ENCODE measurements at regions of chr19 and their contacts with region 1.

Region 1: DNA sequence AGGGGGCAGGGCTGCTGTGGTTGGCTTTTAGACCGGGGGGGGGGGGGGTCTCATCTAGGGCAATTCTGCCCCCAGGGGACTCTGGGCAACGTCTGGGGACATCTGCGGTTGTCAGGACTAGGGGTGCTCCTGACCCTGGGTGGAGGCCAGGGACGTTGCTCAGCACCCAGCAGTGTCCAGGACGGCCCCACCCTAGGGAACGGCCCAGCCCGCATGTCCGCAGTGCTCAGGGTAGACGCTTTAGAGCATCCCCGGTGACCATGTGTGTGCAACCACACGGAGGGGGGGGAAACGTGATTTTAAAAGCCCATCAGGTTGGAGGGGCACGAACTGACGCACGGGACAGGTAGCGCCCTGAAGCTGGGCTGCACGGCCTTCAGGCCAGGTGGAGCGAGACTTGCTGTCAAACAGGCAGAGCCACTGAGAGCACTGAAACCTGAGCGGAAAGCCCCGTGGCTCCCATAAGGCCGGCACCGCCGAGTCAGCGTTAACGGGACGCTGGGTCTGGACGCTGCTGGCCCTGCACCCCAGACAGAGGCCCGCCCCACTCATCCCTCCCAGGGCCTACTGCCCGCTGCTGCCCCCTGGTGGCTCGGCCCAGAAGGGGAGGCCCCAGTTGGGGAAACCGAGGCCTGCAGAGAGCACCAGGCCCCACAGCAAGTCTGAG is 8.3 kb downstream of the CACTIN start:
- DNase-seq: peak in 2 of 3 donors; percentile 35 to 51
- H3K4me3 ChIP-seq: peak overlapping the region in 4 of 7 experiments; percentile 13 to 71 (median 61)
- H3K27ac ChIP-seq: no peak overlapping the region
- H3K4me1 ChIP-seq: peaks cover 0 to 21% (median 21%) of the 10 kb centered on the region in 4 experiments
- H3K27me3 ChIP-seq: no peaks in the 10 kb centered on the region

Region 2: GRCh38 chr19:3557461-3558248 is 60.6 kb before region 1 on chr19 and contains the start of gene MFSD12:
- CTCF ChIA-PET with region 1: no interaction called
- POLR2A ChIA-PET with region 1: no interaction called
- DNase-seq: peak; percentile 92 to 96 (median 95)
- H3K4me3 ChIP-seq: peak within 1 kb of the TSS; percentile 62 to 97 (median 87)
- H3K27ac ChIP-seq: peak within 1 kb of the TSS in 1 of 2 experiments; percentile 74
- H3K4me1 ChIP-seq: peaks cover 6 to 60% (median 49%) of the 10 kb centered on the region in 4 experiments
- H3K27me3 ChIP-seq: no peaks in the 10 kb centered on the region

Region 3: GRCh38 chr19:3606690-3607289 is 11.5 kb before region 1 on chr19 and contains the start of gene TBXA2R:
- CTCF ChIA-PET with region 1: interaction called, 18 read pairs
- POLR2A ChIA-PET with region 1: no interaction called
- DNase-seq: peak in 2 of 3 donors; percentile 45 to 53
- H3K4me3 ChIP-seq: peak within 1 kb of the TSS; percentile 37 to 81 (median 72)
- H3K27ac ChIP-seq: peak within 1 kb of the TSS in 1 of 2 experiments; percentile 56
- H3K4me1 ChIP-seq: peaks cover 11 to 65% (median 63%) of the 10 kb centered on the region in 4 experiments
- H3K27me3 ChIP-seq: no peaks in the 10 kb centered on the region

Measured in common myeloid progenitor, CD34-positive (primary cell).